Activated T-helper 1 cell treated with anti-CD3 and anti-CD28 coated beads, Interleukin-12 subunit alpha, Interleukin-12 subunit beta, Interleukin-2, Interleukin-4 antibody, amounts not matched to agents 30 ng/mL and 10 ng/mL and 1 ng/mL, durations not matched to agents 14 hours and 24 hours and 36 hours (primary cell): ENCODE measurements at regions of chr5 and their contacts with region 1.

Region 1: DNA sequence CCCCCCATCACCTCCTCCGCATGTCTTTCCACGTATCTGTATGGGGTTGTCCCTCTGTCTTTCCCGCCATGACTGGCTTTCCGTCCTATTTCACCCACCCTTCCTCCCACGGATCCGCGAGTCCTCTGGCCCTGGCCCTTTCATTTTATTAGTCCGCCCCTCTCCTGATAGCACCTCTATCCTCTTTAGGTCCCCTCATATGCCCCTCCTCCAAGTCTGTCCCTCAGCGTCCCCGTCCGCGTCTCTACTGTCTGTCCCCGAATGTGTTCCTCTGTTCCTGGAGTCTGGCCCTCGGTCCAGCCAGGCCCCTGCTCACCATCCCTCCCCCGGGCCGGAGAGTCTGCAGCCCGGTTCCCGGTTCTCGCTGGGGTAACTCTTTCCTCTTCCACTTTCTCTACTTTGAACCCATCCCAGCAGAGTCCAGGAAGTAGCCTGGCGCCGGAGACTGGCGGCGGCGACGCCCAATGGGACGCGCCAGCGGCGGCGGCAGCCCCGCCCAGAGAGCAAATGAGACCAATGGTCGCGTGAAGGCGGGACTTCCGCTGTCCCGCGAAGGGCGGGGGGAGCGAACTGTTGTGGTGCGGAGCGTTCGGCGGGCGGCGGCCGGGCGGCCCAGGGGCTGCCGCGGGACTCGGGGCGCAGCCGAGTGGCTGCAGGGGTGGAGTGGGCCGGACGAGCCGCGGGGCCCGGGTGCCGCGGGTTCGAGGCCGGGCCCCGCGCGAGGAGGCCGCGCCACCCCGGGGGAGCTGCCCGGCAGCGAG is at the start of gene SAP30L:
- DNase-seq: peak; percentile 96
- H3K4me3 Mint-ChIP-seq: peak within 1 kb of the TSS; percentile 99
- H3K27ac Mint-ChIP-seq: peak within 1 kb of the TSS; percentile 95
- H3K4me1 Mint-ChIP-seq: peaks cover 65% of the 10 kb centered on the region
- H3K27me3 Mint-ChIP-seq: no peaks in the 10 kb centered on the region
- total RNA-seq, gene SAP30L: 37.5 and 44.4 TPM in 2 replicates

Region 2: DNA sequence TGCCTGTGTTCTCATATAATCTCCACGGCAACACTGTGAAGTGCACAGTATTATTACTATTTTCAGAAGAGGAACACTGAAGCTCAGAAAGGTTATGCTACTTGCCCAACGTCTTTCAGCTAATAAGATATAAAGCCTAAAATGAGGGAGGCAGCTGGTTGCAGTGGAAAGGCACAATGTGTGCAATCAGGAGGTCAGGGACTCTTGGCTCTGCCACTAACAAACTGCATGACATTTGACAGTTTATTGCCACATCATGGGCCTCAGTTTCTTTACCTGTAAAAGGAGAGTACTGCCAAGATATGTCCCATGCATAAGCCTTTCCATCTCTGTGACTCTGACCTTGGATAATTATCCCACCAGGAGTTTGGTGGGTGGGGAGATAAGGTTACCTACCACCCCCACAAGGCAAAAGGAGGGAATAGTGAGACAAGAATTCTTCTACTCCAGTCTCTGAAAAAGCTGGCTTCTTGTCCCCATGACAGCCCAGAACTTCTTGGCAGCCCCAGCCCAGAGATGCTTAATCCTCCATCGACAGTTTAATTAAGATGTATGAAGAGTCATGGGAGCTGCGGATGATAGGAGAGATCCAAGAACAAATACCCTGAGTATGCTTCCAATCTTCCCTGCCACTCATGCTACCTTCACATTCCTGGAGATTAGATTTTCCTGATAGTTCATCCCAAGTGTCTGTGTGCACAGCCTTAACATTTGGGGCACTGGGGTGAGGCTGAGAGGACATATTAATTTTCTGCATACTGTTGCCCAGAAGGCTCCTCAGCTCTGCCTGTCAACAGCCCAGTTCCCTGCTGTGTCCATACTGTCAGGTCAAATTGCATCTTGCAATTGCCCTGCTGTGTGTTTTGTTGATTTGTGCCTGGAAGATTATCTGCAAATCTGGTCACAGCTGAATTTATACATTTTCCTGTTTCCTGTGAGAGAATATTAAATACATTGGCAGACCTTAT is 678.1 kb before region 1 on chr5:
- intact Hi-C with region 1: no loop called
- DNase-seq: no peak
- H3K4me3 Mint-ChIP-seq: no peak overlapping the region
- H3K27ac Mint-ChIP-seq: no peak overlapping the region
- H3K4me1 Mint-ChIP-seq: no peaks in the 10 kb centered on the region
- H3K27me3 Mint-ChIP-seq: peaks cover 3% of the 10 kb centered on the region

Region 3: DNA sequence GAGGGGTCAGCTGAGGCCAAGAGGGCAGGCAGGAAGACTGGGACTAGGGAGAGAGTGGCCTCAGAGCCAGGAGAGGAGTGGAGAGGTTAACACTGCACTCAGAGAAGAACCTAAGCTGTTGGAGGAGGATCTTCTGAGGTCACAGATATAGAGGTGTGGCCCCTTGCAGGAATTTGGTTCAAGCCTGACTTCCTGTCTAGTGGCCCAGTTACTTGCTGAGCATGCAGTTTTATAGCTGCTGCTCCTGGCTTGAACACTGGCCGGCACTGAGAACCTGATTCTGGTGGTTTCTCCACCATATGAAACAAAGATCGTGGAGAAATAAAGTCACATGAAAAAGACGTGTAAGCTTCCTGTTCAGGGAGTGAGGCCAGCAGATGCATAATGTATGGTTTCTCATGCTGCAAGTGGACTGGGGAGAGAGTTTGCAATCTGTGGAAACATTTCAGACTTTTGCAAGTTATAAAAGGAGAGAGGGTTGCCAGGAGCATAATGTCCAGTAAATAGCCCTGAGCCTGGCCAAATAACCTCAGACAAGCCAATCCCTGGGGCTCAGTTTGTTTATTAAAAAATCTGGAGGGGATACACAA is 172.5 kb before region 1 on chr5:
- intact Hi-C with region 1: loop called (anchors 10 kb)
- DNase-seq: peak; percentile 27
- H3K4me3 Mint-ChIP-seq: peak overlapping the region; percentile 54
- H3K27ac Mint-ChIP-seq: peak overlapping the region; percentile 79
- H3K4me1 Mint-ChIP-seq: peaks cover 69% of the 10 kb centered on the region
- H3K27me3 Mint-ChIP-seq: no peaks in the 10 kb centered on the region

Region 4: GRCh38 chr5:154371687-154372086 is 73.9 kb before region 1 on chr5:
- intact Hi-C with region 1: no loop called
- DNase-seq: no peak
- H3K4me3 Mint-ChIP-seq: no peak overlapping the region
- H3K27ac Mint-ChIP-seq: no peak overlapping the region
- H3K4me1 Mint-ChIP-seq: peaks cover 9% of the 10 kb centered on the region
- H3K27me3 Mint-ChIP-seq: no peaks in the 10 kb centered on the region

Region 5: GRCh38 chr5:154405078-154405792 is 40.4 kb before region 1 on chr5:
- intact Hi-C with region 1: loop called (anchors 1 kb)
- DNase-seq: peak; percentile 50
- H3K4me3 Mint-ChIP-seq: peak overlapping the region; percentile 26
- H3K27ac Mint-ChIP-seq: peak overlapping the region; percentile 40
- H3K4me1 Mint-ChIP-seq: peaks cover 7% of the 10 kb centered on the region
- H3K27me3 Mint-ChIP-seq: no peaks in the 10 kb centered on the region